Dendritic cell treated with granulocyte-macrophage colony-stimulating factor and Interleukin-4, amounts not matched to agents 40 ng/mL and 50 ng/mL, for 4 days (primary cell): ENCODE measurements at regions of chr4 and their contacts with region 1.

Region 1: DNA sequence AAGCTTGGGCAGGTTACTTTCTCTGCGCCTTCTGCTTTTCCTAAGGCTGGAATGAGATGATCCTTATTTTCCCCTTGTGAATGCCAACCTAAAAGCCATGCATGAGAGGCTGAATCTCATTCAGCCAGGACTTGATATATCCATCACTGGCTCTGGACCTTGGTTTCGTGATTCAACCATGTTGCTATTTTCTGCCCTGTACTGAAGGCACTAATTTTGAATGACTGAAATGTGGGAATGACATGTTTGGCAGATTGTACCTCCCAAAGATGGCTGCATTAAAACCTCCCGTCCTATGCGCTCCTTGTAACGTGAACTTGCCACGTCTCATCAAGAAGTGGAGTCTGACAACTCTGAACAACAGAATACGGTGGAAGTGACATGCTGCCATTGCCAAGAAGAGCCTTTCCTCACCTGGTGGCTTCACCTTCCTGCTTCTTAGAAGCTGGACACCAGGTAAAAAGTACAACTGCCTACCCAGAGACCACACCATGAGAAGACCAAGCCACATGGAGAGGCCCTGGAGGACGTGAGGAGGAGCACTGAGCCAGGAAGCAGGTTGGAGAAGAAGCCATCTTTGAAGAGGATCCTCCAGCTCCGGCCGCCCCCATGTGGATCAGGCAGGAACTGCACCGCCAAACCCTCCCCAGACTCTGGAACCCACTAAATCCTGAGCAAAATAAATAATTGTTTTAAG is 174.5 kb downstream of the NSUN7 start:
- H3K4me3 Mint-ChIP-seq: no peak overlapping the region
- H3K27ac Mint-ChIP-seq: no peak overlapping the region
- H3K4me1 Mint-ChIP-seq: peaks cover 5% of the 10 kb centered on the region
- H3K27me3 Mint-ChIP-seq: peaks cover 1% of the 10 kb centered on the region

Region 2: GRCh38 chr4:40908702-40909362 is 15.4 kb before region 1 on chr4:
- intact Hi-C with region 1: loop called (anchors 1 kb)
- H3K4me3 Mint-ChIP-seq: no peak overlapping the region
- H3K27ac Mint-ChIP-seq: no peak overlapping the region
- H3K4me1 Mint-ChIP-seq: peaks cover 6% of the 10 kb centered on the region
- H3K27me3 Mint-ChIP-seq: peaks cover 1% of the 10 kb centered on the region